SK-N-SH (cell line): ENCODE measurements at regions of chr19 and their contacts with region 1.

Region 1: DNA sequence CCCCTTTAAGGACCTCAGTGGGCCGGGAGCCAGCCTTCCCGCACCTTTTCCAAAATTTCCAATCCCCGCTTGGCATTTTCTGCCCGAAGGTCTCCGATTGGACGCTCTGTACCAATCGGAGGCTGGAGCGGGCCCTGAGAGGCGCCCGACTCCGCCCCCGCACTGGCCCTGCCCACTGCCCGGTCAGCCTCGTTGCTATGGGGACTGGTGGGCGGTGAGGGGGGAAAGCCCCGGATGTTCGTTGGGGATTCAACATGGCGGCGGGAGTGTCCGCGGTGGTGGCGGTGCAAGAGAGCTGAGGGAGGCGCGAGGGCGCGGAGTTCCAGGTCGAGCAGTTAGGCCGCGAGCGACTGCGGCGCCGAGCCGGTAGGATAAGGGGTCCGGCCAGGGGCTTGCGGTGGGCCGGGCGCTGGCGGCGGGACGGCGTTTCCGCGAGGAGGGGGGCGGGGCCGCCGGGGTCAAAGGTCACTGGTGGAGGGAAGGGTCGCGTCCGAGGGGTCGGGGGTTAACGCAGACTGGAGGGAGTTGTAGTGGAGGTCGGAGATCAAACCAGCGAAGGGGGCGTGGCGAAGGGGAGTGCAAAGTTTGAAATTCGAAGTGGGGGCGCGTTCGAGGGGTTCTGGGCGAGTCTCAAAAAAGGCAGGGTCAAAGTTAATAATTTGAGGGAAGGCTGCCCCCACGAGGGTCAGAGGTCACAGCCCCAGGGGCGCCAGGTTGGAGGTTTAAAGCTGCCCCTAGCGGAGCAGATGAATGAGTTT is at the start of gene PAK4:
- DNase-seq: peak; percentile 100
- H3K4me3 ChIP-seq: peak within 1 kb of the TSS; percentile 83 to 91
- H3K27ac ChIP-seq: peak within 1 kb of the TSS; percentile 65 to 76; a peak in 3 of 4 replicates
- H3K4me1 ChIP-seq: peaks cover 0 to 40% of the 10 kb centered on the region in 2 experiments; a peak in 1 of 4 replicates
- H3K27me3 ChIP-seq: no peaks in the 10 kb centered on the region
- CTCF ChIP-seq: no peak
- EP300 ChIP-seq: no peak
- RAD21 ChIP-seq: no peak
- polyA plus RNA-seq, gene PAK4: 24.7 and 36.4 TPM in 2 replicates

Region 2: DNA sequence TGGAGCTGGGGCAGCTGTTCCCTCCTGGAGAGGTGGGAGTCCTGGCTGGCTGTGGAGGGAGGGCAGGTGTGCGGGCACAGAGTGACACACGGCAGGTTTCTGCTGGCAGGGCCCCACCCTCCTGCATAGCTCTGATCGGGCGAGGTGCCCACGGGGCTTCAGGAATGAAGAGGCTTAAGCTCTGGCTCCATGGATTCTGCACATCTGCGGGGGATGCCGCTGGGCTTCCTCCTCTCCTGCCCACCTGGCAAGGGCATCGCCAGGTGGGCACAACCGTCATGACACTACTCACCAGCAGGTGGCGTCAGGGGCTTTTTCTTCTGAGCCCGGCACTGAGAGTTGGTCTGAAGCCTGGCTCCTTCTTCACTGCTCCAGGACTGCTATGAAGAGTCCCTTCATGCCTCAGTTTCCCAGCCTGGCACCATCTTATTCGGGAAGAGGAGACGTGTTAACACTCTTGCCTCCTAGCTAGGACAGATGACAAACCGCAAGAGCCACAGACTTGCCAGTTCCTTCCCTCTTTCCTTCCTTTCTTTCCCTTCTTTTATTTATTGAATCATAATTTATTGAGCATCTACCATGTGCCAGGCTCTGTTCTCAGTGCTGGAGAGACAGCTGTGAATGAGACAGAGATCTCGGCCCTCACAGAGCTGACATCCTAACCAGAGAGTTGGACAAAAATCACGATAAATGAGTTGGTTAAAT is 15.3 kb before region 1 on chr19:
- CTCF ChIA-PET with region 1: interaction called, 21 read pairs
- POLR2A ChIA-PET with region 1: no interaction called
- DNase-seq: peak; percentile 80
- H3K4me3 ChIP-seq: no peak overlapping the region
- H3K27ac ChIP-seq: no peak overlapping the region
- H3K4me1 ChIP-seq: peaks cover 0 to 8% of the 10 kb centered on the region in 2 experiments; a peak in 1 of 4 replicates
- H3K27me3 ChIP-seq: no peaks in the 10 kb centered on the region
- CTCF ChIP-seq: peak; percentile 77
- EP300 ChIP-seq: no peak
- RAD21 ChIP-seq: peak; percentile 75

Region 3: GRCh38 chr19:39144245-39145071 is 18.7 kb after region 1 on chr19:
- CTCF ChIA-PET with region 1: interaction called, 12 read pairs
- POLR2A ChIA-PET with region 1: interaction called, 4 read pairs
- DNase-seq: peak; percentile 80
- H3K4me3 ChIP-seq: no peak overlapping the region
- H3K27ac ChIP-seq: peak overlapping the region in 1 of 2 experiments; percentile 82; a peak in 2 of 4 replicates
- H3K4me1 ChIP-seq: peaks cover 2 to 43% of the 10 kb centered on the region in 2 experiments; a peak in 3 of 4 replicates
- H3K27me3 ChIP-seq: no peaks in the 10 kb centered on the region
- CTCF ChIP-seq: no peak
- EP300 ChIP-seq: peak in 1 of 2 experiments; percentile 39; a peak in 1 of 4 replicates
- RAD21 ChIP-seq: no peak

Region 4: GRCh38 chr19:39177110-39177699 is 51.5 kb after region 1 on chr19:
- CTCF ChIA-PET with region 1: interaction called, 14 read pairs
- POLR2A ChIA-PET with region 1: no interaction called
- DNase-seq: no peak
- H3K4me3 ChIP-seq: no peak overlapping the region
- H3K27ac ChIP-seq: no peak overlapping the region; a peak in 1 of 4 replicates
- H3K4me1 ChIP-seq: peaks cover 0 to 24% of the 10 kb centered on the region in 2 experiments; a peak in 1 of 4 replicates
- H3K27me3 ChIP-seq: no peaks in the 10 kb centered on the region
- CTCF ChIP-seq: no peak
- EP300 ChIP-seq: no peak
- RAD21 ChIP-seq: no peak

Region 5: DNA sequence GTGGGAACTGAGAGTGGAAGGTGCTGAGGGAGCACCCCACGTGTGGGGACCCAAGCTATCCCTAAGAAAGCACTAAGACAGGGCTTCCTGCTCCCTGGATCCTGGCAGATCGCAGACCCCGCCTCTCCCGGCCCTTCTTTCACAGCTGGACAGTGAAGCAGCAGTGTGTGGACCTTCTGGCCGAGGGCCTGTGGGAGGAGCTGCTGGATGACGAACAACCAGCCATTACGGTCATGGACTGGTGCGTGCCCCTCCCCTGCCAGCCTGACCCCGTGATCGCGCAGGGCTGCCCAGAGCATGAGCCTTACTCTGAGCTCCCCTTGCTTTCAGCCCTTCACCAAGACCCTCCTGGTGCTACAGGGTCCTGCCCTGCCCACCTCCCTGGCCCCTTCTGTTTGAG is 73.3 kb after region 1 on chr19:
- CTCF ChIA-PET with region 1: interaction called, 26 read pairs
- POLR2A ChIA-PET with region 1: no interaction called
- DNase-seq: peak; percentile 66
- H3K4me3 ChIP-seq: no peak overlapping the region
- H3K27ac ChIP-seq: no peak overlapping the region
- H3K4me1 ChIP-seq: peaks cover 0 to 6% of the 10 kb centered on the region in 2 experiments; a peak in 1 of 4 replicates
- H3K27me3 ChIP-seq: peaks cover 45% of the 10 kb centered on the region
- CTCF ChIP-seq: no peak
- EP300 ChIP-seq: no peak
- RAD21 ChIP-seq: no peak

Region 6: GRCh38 chr19:39212375-39212742 is 86.6 kb after region 1 on chr19:
- CTCF ChIA-PET with region 1: no interaction called
- POLR2A ChIA-PET with region 1: no interaction called
- DNase-seq: peak; percentile 66
- H3K4me3 ChIP-seq: no peak overlapping the region
- H3K27ac ChIP-seq: no peak overlapping the region
- H3K4me1 ChIP-seq: no peaks in the 10 kb centered on the region
- H3K27me3 ChIP-seq: no peaks in the 10 kb centered on the region
- CTCF ChIP-seq: peak; percentile 45
- EP300 ChIP-seq: no peak
- RAD21 ChIP-seq: peak; percentile 70

Region 7: GRCh38 chr19:39335168-39335548 is 209.4 kb after region 1 on chr19:
- CTCF ChIA-PET with region 1: interaction called, 22 read pairs
- POLR2A ChIA-PET with region 1: no interaction called
- DNase-seq: peak; percentile 14
- H3K4me3 ChIP-seq: no peak overlapping the region
- H3K27ac ChIP-seq: no peak overlapping the region
- H3K4me1 ChIP-seq: no peaks in the 10 kb centered on the region
- H3K27me3 ChIP-seq: no peaks in the 10 kb centered on the region
- CTCF ChIP-seq: no peak
- EP300 ChIP-seq: no peak
- RAD21 ChIP-seq: no peak